ENCODE measurements at regions of chr14 and their contacts with region 1.

Region 1: GRCh38 chr14:71267007-71267513 is 359.8 kb downstream of the PCNX1 start:
- DNase-seq: peak; percentile 50
- ATAC-seq: peak; percentile 84
- H3K4me3 Mint-ChIP-seq: peak overlapping the region; percentile 20
- H3K27ac Mint-ChIP-seq: peak overlapping the region; percentile 77
- H3K4me1 Mint-ChIP-seq: peaks cover 39% of the 10 kb centered on the region
- H3K27me3 Mint-ChIP-seq: no peaks in the 10 kb centered on the region
- CTCF ChIP-seq: no peak

Region 2: DNA sequence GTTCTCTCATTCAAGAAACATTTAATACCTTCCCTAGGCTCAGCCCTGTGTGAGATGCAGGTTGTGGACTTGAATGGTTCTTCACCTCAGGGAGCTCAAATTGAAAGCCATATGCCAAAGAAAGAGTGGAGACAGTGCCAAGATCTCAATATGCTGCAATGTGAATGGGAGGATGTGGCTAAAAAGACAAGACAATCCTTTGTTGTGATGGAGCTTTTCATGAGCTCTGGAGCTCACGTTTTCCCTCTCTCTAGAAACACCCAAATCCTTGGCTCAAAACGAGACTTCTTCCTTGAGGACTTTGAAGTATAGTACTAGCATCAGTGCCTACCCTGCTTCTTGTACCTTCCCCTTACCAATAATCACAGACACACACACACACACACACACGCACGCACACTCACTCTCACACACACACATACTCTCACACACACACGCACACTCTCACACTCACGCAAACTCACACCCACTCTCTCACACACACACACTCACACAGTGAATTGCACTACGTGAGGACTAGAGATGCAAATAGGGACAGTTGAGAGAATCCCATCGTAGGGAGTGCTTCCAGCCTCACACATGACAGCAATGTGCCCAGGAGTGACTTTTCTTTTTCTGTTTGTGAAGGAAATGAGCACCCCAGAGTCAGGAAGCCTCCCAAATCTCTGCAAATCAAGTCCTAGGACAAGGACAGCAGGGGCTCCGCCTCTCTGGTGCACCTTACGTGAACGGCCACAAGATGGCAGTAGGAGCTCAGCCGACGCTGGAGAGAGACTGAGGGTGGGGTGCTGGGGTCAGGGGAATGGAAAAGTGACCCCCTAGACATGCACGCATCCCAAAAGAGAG is 128.4 kb before region 1 on chr14:
- CTCF ChIA-PET with region 1: interaction called, 3 read pairs
- POLR2A ChIA-PET with region 1: no interaction called
- intact Hi-C with region 1: loop called (anchors 5 kb)
- DNase-seq: peak; percentile 68
- ATAC-seq: no peak
- H3K4me3 Mint-ChIP-seq: no peak overlapping the region
- H3K27ac Mint-ChIP-seq: no peak overlapping the region
- H3K4me1 Mint-ChIP-seq: peaks cover 23% of the 10 kb centered on the region
- H3K27me3 Mint-ChIP-seq: no peaks in the 10 kb centered on the region
- CTCF ChIP-seq: peak; percentile 97

Measured in activated CD8-positive, alpha-beta T cell treated with anti-CD3 and anti-CD28 coated beads for 36 hours (primary cell).